Naive thymus-derived CD4-positive, alpha-beta T cell (primary cell): ENCODE measurements at regions of chr4 and their contacts with region 1.

Region 1: GRCh38 chr4:102318549-102318948 is 26.7 kb downstream of the SLC39A8 start:
- DNase-seq: no peak
- ATAC-seq: no peak
- H3K4me3 ChIP-seq: no peak overlapping the region
- H3K4me3 Mint-ChIP-seq: no peak overlapping the region
- H3K27ac ChIP-seq: no peak overlapping the region
- H3K27ac Mint-ChIP-seq: no peak overlapping the region
- H3K4me1 ChIP-seq: no peaks in the 10 kb centered on the region
- H3K4me1 Mint-ChIP-seq: peaks cover 29 to 50% (median 43%) of the 10 kb centered on the region in 7 donors
- H3K27me3 ChIP-seq: no peaks in the 10 kb centered on the region
- H3K27me3 Mint-ChIP-seq: no peaks in the 10 kb centered on the region

Region 2: GRCh38 chr4:102335616-102336015 is 17.1 kb after region 1 on chr4:
- CTCF ChIA-PET with region 1: no interaction called
- POLR2A ChIA-PET with region 1: no interaction called
- intact Hi-C with region 1: loop called in 1 of 2 experiments (anchors 2 kb)
- DNase-seq: peak in 2 of 9 donors; percentile 3 to 22
- ATAC-seq: no peak
- H3K4me3 ChIP-seq: no peak overlapping the region
- H3K4me3 Mint-ChIP-seq: peak overlapping the region in 3 of 10 donors; percentile 13 to 18 (median 18)
- H3K27ac ChIP-seq: no peak overlapping the region
- H3K27ac Mint-ChIP-seq: peak overlapping the region in 1 of 9 donors; percentile 16
- H3K4me1 ChIP-seq: peaks cover 0 to 9% of the 10 kb centered on the region in 2 donors
- H3K4me1 Mint-ChIP-seq: peaks cover 32 to 83% (median 77%) of the 10 kb centered on the region in 7 donors
- H3K27me3 ChIP-seq: no peaks in the 10 kb centered on the region
- H3K27me3 Mint-ChIP-seq: no peaks in the 10 kb centered on the region

Region 3: GRCh38 chr4:102535398-102536082 is 217.0 kb after region 1 on chr4:
- CTCF ChIA-PET with region 1: no interaction called
- POLR2A ChIA-PET with region 1: no interaction called
- intact Hi-C with region 1: no loop called
- DNase-seq: no peak
- ATAC-seq: peak; percentile 30
- H3K4me3 ChIP-seq: no peak overlapping the region
- H3K4me3 Mint-ChIP-seq: no peak overlapping the region
- H3K27ac ChIP-seq: no peak overlapping the region
- H3K27ac Mint-ChIP-seq: peak overlapping the region in 1 of 9 donors; percentile 62
- H3K4me1 ChIP-seq: peaks cover 19 to 21% of the 10 kb centered on the region in 2 donors
- H3K4me1 Mint-ChIP-seq: peaks cover 22 to 71% (median 53%) of the 10 kb centered on the region in 7 donors
- H3K27me3 ChIP-seq: no peaks in the 10 kb centered on the region
- H3K27me3 Mint-ChIP-seq: no peaks in the 10 kb centered on the region